GM12878 (cell line): ENCODE measurements at regions of chr6 and their contacts with region 1.

Region 1: DNA sequence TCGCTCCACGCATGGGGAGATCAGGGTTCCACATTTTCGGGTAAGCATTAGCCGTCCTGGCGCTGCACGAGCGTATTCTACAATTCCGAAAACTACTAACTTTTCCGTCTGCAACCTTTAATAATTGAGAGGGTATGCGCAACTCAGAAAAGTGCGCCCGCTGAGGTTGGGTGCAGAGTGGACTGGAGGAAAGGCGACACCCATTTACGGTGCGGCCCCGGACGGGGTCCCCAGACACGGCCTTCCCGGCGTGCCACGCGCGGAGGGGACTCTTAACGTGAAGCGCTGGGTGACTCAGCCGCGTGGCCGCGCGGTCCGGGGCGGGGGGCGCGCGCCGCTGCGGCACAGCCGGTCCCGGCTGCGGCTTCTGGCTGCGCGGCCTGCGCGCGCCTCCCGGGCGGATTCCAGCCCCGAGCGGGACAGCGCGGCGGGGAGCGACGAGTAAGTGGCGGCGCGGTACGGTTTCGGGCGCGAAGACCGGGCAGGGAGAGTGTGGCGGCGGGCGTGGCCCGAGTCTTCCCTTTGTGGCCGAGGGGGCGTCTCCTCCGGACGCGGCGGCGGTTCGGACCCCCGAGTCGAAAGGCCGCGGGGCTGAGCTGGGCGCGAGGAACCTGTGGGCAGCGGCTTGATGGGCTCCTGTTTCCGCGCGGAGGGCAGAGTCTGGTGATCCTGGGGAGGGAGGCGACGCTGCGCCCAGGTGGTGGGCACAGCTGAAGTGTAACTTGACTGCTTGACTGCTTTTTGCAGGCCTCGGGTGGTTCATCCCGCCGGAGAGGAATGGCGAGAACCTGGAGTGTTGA is at the starts of genes KCTD20 and PXT1:
- DNase-seq: peak; percentile 48
- ATAC-seq: peak; percentile 85
- H3K4me3 ChIP-seq: peak within 1 kb of the TSS; percentile 86
- H3K27ac ChIP-seq: peak within 1 kb of the TSS; percentile 95
- H3K4me1 ChIP-seq: peaks cover 7% of the 10 kb centered on the region
- H3K27me3 ChIP-seq: no peaks in the 10 kb centered on the region
- CTCF ChIP-seq: no peak
- EP300 ChIP-seq: peak; percentile 32 to 56; a peak in 1 of 4 replicates
- POLR2A ChIP-seq: peak; percentile 91
- RAD21 ChIP-seq: no peak
- polyA plus RNA-seq, gene KCTD20: 18.1 to 20.1 TPM
- polyA plus RNA-seq, gene PXT1: 0.52 to 0.60 TPM

Region 2: DNA sequence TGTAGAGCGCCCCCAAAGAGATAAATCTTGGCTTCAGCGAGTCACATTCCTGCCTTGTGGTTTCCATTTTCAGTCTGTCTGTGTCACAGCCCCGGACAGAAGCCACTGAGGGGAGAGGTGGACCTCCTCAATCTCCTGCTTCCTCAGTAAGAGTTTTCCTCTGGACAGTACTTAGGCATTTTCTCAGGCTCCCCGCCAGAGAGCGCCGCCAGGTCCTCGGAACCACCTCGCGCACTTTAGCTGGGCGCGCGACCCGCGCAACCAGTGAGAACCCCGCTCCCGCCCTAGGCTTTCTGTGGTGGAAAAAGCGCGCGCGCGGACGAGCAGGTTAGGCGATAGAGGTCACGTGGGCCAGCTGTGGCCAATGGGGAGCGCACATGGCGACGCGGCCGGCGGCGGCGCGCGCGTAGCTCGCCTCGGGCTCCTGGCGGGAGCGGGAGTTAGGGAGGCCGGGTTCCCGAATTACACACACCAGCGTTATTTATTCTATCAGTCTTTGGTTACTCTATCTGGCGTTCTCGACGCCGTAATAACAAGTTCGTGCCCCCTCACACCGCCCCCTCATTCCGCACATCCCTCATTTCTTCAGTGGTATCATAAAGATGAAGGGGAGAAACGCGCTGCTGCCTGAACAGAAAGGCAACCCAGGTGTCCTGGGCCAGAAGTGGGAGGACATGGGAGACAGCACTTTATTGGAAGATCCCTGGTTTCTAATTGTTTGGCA is 19.6 kb before region 1 on chr6:
- CTCF ChIA-PET with region 1: interaction called, 9 read pairs
- POLR2A ChIA-PET with region 1: interaction called, 19 read pairs
- RAD21 ChIA-PET with region 1: interaction called, 9 read pairs
- SMC1A ChIA-PET with region 1: interaction called, 6 read pairs
- in situ Hi-C with region 1: no loop called
- intact Hi-C with region 1: loop called (anchors 1 kb)
- DNase-seq: peak; percentile 85
- ATAC-seq: peak; percentile 98
- H3K4me3 ChIP-seq: peak overlapping the region; percentile 69
- H3K27ac ChIP-seq: peak overlapping the region; percentile 82
- H3K4me1 ChIP-seq: peaks cover 8% of the 10 kb centered on the region
- H3K27me3 ChIP-seq: no peaks in the 10 kb centered on the region
- CTCF ChIP-seq: peak; percentile 74 to 84 (median 74)
- EP300 ChIP-seq: no peak
- POLR2A ChIP-seq: peak; percentile 80
- RAD21 ChIP-seq: peak; percentile 74

Region 3: DNA sequence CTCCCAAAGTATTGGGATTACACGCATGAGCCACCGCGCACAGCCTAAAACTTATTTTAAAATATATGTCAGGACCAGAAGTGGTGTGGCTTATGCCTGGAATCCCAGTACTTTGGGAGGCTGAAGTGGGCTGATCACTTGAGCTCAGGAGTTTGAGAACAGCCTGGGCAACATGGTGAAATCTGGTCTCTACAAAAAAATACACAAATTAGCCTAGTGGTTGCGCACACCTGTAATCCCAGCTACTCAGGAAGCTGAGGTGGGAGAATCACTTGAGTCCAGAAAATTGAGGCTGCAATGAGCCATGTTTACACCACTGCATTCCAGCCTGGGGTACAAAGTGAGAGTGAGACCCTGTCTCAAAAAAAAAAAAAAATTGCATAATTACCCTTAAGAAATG is 14.0 kb before region 1 on chr6:
- CTCF ChIA-PET with region 1: interaction called, 4 read pairs
- POLR2A ChIA-PET with region 1: interaction called, 19 read pairs
- RAD21 ChIA-PET with region 1: interaction called, 9 read pairs
- SMC1A ChIA-PET with region 1: interaction called, 6 read pairs
- in situ Hi-C with region 1: no loop called
- intact Hi-C with region 1: no loop called
- DNase-seq: no peak
- ATAC-seq: no peak
- H3K4me3 ChIP-seq: no peak overlapping the region
- H3K27ac ChIP-seq: no peak overlapping the region
- H3K4me1 ChIP-seq: peaks cover 16% of the 10 kb centered on the region
- H3K27me3 ChIP-seq: no peaks in the 10 kb centered on the region
- CTCF ChIP-seq: no peak
- EP300 ChIP-seq: no peak
- POLR2A ChIP-seq: no peak
- RAD21 ChIP-seq: no peak

Region 4: GRCh38 chr6:36459501-36459900 is 16.6 kb after region 1 on chr6:
- CTCF ChIA-PET with region 1: interaction called, 6 read pairs
- POLR2A ChIA-PET with region 1: interaction called, 7 read pairs
- RAD21 ChIA-PET with region 1: interaction called, 3 read pairs
- SMC1A ChIA-PET with region 1: interaction called, 14 read pairs
- in situ Hi-C with region 1: no loop called
- intact Hi-C with region 1: no loop called
- DNase-seq: no peak
- ATAC-seq: no peak
- H3K4me3 ChIP-seq: no peak overlapping the region
- H3K27ac ChIP-seq: no peak overlapping the region
- H3K4me1 ChIP-seq: no peaks in the 10 kb centered on the region
- H3K27me3 ChIP-seq: no peaks in the 10 kb centered on the region
- CTCF ChIP-seq: no peak
- EP300 ChIP-seq: no peak
- POLR2A ChIP-seq: no peak
- RAD21 ChIP-seq: no peak

Region 5: GRCh38 chr6:36504982-36505381 is 62.1 kb after region 1 on chr6:
- CTCF ChIA-PET with region 1: no interaction called
- POLR2A ChIA-PET with region 1: no interaction called
- RAD21 ChIA-PET with region 1: no interaction called
- SMC1A ChIA-PET with region 1: no interaction called
- in situ Hi-C with region 1: no loop called
- intact Hi-C with region 1: no loop called
- DNase-seq: no peak
- ATAC-seq: no peak
- H3K4me3 ChIP-seq: no peak overlapping the region
- H3K27ac ChIP-seq: no peak overlapping the region
- H3K4me1 ChIP-seq: no peaks in the 10 kb centered on the region
- H3K27me3 ChIP-seq: no peaks in the 10 kb centered on the region
- CTCF ChIP-seq: no peak
- EP300 ChIP-seq: no peak
- POLR2A ChIP-seq: no peak
- RAD21 ChIP-seq: no peak

Region 6: DNA sequence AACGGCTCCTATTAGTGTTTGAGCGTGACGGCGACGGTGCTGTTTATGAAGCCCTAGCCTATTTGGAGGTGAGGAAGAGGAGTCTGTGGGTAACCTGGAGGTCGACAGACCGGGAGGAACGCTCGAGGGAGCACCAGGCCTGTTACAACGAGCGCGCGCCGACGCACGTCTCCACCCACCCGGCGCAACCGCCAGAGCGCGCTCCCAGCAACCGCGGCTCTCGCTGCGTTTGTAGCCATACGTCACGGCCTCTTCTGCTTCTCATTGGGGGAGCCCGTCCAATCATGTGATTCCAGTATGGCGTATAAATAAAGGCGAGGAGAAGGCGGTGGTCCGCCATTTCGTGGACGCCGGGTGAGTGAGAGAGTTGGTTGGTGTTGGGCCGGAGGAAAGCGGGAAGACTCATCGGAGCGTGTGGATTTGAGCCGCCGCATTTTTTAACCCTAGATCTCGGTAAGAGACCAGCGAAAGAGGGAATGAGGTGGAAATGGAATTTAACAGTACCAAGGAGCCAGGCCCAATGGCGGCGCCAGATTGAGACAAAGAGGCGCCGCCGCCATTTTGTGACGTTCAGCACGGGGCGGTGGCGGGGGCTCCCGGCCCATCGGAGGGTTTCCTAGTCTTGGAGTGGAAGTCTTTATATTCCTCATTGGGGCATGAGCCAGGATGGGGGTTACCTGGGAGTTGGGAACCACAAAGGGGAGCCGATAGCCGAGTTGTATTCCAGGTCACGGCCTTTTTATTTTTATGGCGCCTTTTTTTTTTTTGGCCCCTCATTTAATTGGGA is 151.4 kb after region 1 on chr6 and contains the start of gene SRSF3:
- CTCF ChIA-PET with region 1: interaction called, 4 read pairs
- POLR2A ChIA-PET with region 1: interaction called, 3 read pairs
- RAD21 ChIA-PET with region 1: no interaction called
- SMC1A ChIA-PET with region 1: interaction called, 4 read pairs
- in situ Hi-C with region 1: no loop called
- intact Hi-C with region 1: loop called (anchors 2 kb)
- DNase-seq: peak; percentile 90
- ATAC-seq: peak; percentile 89
- H3K4me3 ChIP-seq: peak within 1 kb of the TSS; percentile 100
- H3K27ac ChIP-seq: peak within 1 kb of the TSS; percentile 87
- H3K4me1 ChIP-seq: peaks cover 11% of the 10 kb centered on the region
- H3K27me3 ChIP-seq: no peaks in the 10 kb centered on the region
- CTCF ChIP-seq: peak; percentile 20 to 43 (median 28); a peak in 3 of 6 replicates
- EP300 ChIP-seq: peak in 1 of 2 experiments; percentile 56; a peak in 2 of 4 replicates
- POLR2A ChIP-seq: peak; percentile 100
- RAD21 ChIP-seq: no peak
- polyA plus RNA-seq, gene SRSF3: 971 to 1,377 TPM